Prostate gland (tissue), 2 donors: ENCODE measurements at regions of chr6 and their contacts with region 1.

Region 1: GRCh38 chr6:27687154-27688013 is 214.5 kb upstream of the ZNF184 start:
- DNase-seq: peak; percentile 76
- H3K4me3 ChIP-seq: peak overlapping the region; percentile 30 to 39
- H3K27ac ChIP-seq: peak overlapping the region; percentile 9 to 52
- H3K4me1 ChIP-seq: no peaks in the 10 kb centered on the region
- H3K27me3 ChIP-seq: peaks cover 3% of the 10 kb centered on the region
- CTCF ChIP-seq: peak in 2 of 4 experiments; percentile 44 to 60
- POLR2A ChIP-seq: no peak

Region 2: GRCh38 chr6:27642744-27643456 is 44.5 kb before region 1 on chr6:
- intact Hi-C with region 1: no loop called
- DNase-seq: no peak
- H3K4me3 ChIP-seq: no peak overlapping the region
- H3K27ac ChIP-seq: no peak overlapping the region
- H3K4me1 ChIP-seq: no peaks in the 10 kb centered on the region
- H3K27me3 ChIP-seq: peaks cover 4% of the 10 kb centered on the region
- CTCF ChIP-seq: no peak
- POLR2A ChIP-seq: no peak

Region 3: DNA sequence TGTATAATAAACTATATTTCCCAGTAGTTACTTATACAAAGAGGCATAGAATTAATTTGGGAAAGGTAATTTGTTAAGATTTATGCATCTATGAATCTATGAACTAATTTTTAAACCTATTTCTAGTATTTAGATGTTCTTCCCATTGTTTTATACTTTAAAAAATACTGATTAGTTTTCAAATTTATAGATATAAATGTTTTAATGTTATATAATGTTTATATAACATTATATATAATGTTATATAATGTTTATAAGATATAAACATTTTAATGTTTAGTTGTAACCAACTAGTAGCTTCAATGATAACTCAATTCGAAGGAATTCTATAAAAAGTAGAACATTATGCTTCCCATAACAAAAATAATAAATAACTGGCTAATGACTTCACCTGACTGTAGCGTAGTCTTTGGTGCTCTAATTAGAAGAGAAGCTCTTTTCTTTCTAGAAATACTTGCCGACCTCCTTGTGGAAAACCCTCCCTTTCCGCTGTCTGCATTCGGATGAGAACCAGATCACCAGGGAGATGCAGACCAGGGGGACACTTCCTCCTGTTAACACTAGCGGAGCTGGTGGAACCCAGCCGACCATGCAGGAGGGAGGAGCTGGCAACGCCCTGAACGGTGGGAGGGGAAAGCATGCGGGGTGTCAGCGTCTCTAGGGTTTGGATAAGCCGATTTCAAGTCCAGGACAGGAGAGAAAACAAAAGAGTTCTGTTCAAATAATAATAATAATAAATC is 66.5 kb after region 1 on chr6:
- intact Hi-C with region 1: loop called (anchors 5 kb)
- DNase-seq: peak; percentile 26
- H3K4me3 ChIP-seq: peak overlapping the region; percentile 18 to 19
- H3K27ac ChIP-seq: no peak overlapping the region
- H3K4me1 ChIP-seq: no peaks in the 10 kb centered on the region
- H3K27me3 ChIP-seq: no peaks in the 10 kb centered on the region
- CTCF ChIP-seq: no peak
- POLR2A ChIP-seq: no peak

Region 4: GRCh38 chr6:27825025-27825793 is 137.8 kb after region 1 on chr6:
- intact Hi-C with region 1: no loop called
- DNase-seq: no peak
- H3K4me3 ChIP-seq: peak overlapping the region; percentile 33 to 41
- H3K27ac ChIP-seq: peak overlapping the region; percentile 45 to 53
- H3K4me1 ChIP-seq: no peaks in the 10 kb centered on the region
- H3K27me3 ChIP-seq: no peaks in the 10 kb centered on the region
- CTCF ChIP-seq: no peak
- POLR2A ChIP-seq: no peak

Region 5: DNA sequence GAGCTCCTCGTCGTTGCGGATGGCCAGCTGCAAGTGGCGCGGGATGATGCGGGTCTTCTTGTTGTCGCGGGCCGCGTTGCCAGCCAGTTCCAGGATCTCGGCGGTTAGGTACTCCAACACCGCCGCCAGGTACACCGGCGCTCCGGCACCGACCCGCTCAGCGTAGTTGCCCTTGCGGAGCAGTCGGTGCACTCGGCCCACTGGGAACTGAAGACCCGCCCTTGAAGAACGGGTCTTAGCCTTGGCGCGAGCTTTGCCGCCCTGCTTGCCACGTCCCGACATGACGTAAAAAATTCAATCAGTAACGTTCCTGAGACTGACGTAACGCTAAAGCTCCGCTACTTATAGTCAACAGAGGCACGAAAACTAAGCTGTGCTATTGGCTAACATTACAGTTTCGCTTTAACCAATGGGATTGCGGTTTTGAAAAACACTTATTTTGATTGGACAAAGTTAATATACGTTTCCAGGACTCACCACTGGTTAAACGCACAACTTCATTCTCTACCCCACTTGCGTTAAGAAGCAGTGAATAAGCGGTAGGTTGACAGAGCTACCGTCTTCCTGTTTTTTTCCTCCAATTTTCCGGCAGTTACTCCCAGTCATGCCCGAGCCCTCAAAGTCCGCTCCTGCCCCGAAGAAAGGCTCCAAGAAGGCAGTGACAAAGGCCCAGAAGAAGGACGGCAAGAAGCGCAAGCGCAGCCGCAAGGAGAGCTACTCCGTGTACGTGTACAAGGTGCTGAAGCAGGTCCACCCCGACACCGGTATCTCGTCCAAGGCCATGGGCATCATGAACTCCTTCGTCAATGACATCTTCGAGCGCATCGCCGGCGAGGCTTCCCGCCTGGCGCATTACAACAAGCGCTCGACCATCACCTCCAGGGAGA is 150.9 kb after region 1 on chr6:
- intact Hi-C with region 1: no loop called
- DNase-seq: peak; percentile 91
- H3K4me3 ChIP-seq: peak overlapping the region; percentile 57 to 69
- H3K27ac ChIP-seq: peak overlapping the region; percentile 94 to 97
- H3K4me1 ChIP-seq: peaks cover 13% of the 10 kb centered on the region
- H3K27me3 ChIP-seq: no peaks in the 10 kb centered on the region
- CTCF ChIP-seq: peak in 2 of 4 experiments; percentile 24 to 78
- POLR2A ChIP-seq: peak; percentile 90

Region 6: GRCh38 chr6:28005124-28005890 is 317.9 kb after region 1 on chr6:
- intact Hi-C with region 1: no loop called
- DNase-seq: no peak
- H3K4me3 ChIP-seq: no peak overlapping the region
- H3K27ac ChIP-seq: no peak overlapping the region
- H3K4me1 ChIP-seq: no peaks in the 10 kb centered on the region
- H3K27me3 ChIP-seq: no peaks in the 10 kb centered on the region
- CTCF ChIP-seq: no peak
- POLR2A ChIP-seq: no peak